ENCODE measurements at regions of chr6 and their contacts with region 1.

Region 1: DNA sequence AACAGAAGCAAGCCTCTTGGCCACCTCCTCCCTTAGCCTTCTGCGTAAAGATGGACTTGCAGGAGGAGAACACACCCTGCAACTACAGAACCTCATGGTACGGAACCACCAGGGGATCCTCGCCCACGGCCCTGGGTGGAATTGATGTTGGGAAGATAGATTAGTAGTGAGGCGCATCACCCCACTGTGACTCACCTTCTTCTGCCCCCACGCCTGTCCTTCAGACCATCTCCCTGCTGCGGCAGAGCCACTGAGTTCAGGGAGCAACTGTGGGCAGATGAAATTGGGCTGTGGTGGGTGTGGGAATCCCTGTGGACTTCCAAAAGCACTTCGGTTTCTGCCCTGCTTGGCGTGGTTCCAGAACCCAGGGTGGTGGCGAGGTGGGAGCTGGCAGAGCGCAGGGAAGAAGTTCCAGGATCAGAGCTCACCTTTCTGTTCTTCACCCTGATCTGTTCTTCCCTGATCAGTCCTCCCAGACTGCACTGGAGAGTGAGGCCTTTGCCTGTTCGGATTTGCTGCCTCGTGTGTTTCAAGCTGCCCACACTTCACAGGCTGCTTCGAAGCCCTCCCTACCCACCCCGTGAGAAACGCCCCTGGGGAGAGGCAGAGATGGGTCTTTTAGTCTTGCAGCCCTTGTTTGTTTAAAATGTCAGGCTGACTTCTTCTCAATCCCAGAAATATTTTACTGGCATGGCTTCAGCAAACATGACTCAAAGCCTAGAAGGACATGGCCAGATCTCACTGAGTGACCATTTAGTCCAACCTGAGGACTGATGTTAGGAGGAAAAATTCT is 92.8 kb upstream of the MLN start:
- DNase-seq: no peak
- ATAC-seq: no peak
- H3K4me3 Mint-ChIP-seq: peak overlapping the region; percentile 47
- H3K27ac Mint-ChIP-seq: peak overlapping the region; percentile 95
- H3K4me1 Mint-ChIP-seq: peaks cover 51% of the 10 kb centered on the region
- H3K27me3 Mint-ChIP-seq: peaks cover 3% of the 10 kb centered on the region

Region 2: DNA sequence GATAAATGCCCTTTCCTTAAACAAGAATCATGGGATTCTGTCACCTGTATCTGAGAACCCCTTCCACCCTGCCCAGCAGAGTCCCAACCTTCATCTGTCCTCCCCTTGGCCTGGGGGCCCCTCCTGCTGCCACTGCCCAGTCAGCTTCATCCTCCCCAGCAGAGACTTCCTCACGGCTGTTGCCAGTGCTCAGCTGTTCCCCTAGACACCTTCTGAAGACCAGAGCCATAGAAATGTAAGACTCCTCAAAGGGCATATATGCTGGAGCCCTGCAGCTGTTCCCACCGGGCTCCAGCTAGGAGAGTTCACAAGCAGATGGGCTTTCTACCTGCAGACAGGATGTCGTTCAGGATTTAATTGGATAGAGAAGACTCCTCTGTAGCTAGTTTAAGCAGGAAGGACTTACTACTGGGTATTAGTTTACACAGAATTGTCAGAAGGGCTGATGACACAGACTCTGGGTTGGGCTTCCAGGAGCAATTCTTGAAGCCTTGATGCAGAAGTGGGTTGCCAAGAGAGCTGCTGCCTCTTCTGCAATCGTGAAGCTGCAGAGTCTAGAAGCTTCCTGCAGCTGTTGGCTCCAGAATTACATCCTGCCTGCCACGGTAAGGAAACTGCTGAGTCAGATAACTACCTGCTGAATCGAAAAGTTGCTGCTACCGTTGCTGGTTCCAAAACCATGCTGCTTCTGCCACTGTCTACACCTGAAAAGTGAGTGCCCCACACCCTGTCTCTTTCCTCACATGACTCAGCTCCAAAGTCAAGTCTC is 35.7 kb before region 1 on chr6:
- POLR2A ChIA-PET with region 1: interaction called, 13 read pairs
- DNase-seq: no peak
- ATAC-seq: peak; percentile 59
- H3K4me3 Mint-ChIP-seq: peak overlapping the region; percentile 27
- H3K27ac Mint-ChIP-seq: peak overlapping the region; percentile 47
- H3K4me1 Mint-ChIP-seq: peaks cover 40% of the 10 kb centered on the region
- H3K27me3 Mint-ChIP-seq: peaks cover 31% of the 10 kb centered on the region

Region 3: GRCh38 chr6:33914645-33915044 is 18.1 kb after region 1 on chr6:
- POLR2A ChIA-PET with region 1: interaction called, 59 read pairs
- DNase-seq: peak; percentile 56
- ATAC-seq: peak; percentile 93
- H3K4me3 Mint-ChIP-seq: peak overlapping the region; percentile 48
- H3K27ac Mint-ChIP-seq: peak overlapping the region; percentile 82
- H3K4me1 Mint-ChIP-seq: peaks cover 33% of the 10 kb centered on the region
- H3K27me3 Mint-ChIP-seq: no peaks in the 10 kb centered on the region

Measured in activated naive CD8-positive, alpha-beta T cell treated with anti-CD3 and anti-CD28 coated beads, Interleukin-2, amount 10 ng/mL, durations not matched to agents 7 days and 5 days (primary cell).